ENCODE measurements at regions of chr18 and their contacts with region 1.

Region 1: DNA sequence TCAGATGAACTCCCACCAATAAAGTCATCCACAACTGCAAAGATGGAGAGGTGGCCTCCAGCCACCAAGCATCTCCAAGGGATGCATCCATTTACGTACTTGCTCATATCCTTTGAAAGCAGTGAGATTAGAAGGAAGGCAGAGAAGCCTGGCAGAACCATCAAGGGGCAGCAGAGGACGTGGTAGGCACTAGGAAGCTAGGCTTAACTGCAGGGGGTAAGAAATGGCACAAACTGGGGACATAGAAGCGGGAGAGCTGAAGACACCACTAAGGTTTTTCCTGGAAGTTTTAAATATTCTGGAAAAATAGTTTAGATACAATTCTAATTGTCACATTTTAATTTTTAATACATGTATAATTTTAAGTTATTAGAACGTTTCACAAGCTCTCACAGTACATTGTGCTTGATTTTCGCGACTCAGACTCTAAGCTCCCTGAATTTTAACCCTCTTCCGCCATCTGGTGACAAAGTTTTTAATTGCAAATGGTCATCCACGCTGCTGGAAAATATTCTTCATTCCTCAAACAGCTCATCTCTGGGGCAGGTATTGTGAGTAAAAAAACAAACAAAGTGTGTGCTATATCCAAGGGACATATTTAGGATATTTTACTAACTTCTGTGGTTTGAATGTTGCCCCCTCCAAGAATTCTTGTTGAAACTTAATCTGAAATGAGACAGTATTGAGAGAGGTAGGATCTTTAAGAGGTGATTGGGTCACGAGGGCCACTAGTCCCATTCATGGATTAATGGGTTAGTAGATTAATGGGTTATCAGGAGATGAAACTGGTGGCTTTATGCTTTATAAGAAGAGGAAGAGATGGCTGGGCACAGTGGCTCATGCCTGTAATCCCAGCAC is 1.6 kb upstream of the PSTPIP2 start:
- DNase-seq: peak in 2 of 10 donors; percentile 18 to 40

Region 2: GRCh38 chr18:45664824-45665763 is 408.6 kb before region 1 on chr18:
- intact Hi-C with region 1: loop called (anchors 5 kb)
- DNase-seq: peak in 6 of 10 donors; percentile 37 to 90 (median 62)

Region 3: DNA sequence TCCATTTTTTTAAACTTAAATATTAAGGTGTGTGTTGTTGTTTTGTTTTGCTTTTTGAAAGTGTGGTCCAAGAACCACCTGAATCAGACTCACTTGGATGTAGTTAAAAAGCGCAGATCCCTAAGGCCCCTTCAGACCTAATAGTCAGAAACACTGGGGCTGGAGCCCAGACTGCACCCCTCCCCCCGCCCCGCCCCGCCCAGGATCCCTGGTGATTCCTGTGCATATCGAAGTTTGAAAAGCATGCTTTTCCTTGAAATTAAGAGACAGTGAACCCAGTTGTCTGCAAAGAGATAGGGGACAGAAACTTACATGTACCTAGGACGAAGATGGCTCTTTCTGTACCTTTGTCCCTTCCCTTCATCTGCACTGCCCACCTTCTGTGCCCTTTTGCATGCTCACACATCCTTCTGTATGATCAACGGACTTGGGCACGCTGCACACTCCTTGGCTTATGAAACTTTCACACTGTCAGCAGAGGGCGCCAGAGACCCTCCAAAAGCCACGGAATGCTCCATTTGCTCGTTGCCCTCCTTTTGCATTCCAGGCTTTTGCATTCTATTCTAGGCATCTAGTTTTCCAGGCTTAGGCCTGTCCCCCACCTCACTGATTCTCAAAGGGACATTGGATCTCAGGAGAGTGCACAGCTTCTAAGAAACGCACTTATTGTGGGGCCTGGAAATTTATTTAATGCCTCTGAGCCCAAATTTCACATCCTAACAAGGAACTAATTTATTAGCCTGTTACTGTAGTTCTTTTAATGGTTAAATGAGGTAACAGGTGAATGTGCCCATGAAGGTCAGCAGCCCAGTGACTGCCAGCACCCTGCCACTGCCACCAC is 382.5 kb before region 1 on chr18:
- intact Hi-C with region 1: loop called (anchors 5 kb)
- DNase-seq: peak; percentile 55 to 96 (median 81)

Region 4: GRCh38 chr18:45967007-45967706 is 106.5 kb before region 1 on chr18 and contains the start of gene EPG5:
- intact Hi-C with region 1: loop called (anchors 5 kb)
- DNase-seq: peak; percentile 90 to 99 (median 96)

Region 5: GRCh38 chr18:46028536-46028891 is 45.2 kb before region 1 on chr18:
- intact Hi-C with region 1: loop called (anchors 5 kb)
- DNase-seq: no peak